Activated CD4-positive, alpha-beta T cell treated with anti-CD3 and anti-CD28 coated beads for 36 hours (primary cell): ENCODE measurements at regions of chr6 and their contacts with region 1.

Region 1: DNA sequence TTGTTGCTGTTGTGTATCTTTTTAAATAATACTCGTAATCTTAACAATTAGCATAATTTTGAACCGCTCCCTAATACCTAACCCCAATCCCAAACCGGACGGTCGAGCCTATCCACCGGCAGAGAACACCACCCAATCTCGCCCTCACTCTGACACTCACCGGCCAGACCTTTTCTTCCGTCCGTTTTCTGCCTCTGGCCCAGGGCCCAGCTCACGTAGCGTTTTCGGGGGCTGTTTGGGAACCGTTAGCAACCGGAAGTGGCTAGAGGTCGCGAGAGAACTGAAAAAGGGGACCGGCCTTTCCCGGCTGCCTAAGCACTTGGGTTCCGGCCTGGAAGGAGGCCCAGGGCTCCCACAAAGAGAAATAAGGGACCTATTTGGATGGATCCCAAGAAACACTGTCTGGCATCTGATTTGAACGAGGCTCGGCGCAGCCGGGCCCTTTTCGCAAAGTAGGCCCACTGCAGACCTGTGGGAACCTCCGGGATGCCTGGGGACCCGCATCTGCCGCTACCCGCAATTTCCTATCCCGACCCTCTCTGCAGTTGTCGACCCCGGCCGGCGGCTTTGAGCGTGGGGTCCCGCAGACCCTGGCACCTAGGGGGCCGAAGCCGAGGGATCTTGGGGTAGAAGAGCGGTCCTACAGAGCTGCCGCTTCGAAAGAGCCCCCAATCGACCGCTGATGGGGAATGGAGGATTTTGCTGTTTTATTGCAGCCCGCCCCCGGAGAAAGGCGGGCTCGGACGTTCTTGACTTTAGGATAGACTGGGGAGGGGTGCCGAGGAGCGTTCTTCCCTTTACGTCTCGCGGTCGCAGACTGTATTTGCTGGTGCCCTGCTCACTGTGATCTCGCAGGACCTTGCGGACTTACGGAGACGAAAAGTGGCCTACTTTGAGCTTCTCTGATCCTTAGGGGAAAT is 4.8 kb upstream of the ZKSCAN8 start:
- DNase-seq: peak; percentile 85
- ATAC-seq: peak; percentile 45
- H3K4me3 Mint-ChIP-seq: peak overlapping the region; percentile 87
- H3K27ac Mint-ChIP-seq: peak overlapping the region; percentile 96
- H3K4me1 Mint-ChIP-seq: peaks cover 70% of the 10 kb centered on the region
- H3K27me3 Mint-ChIP-seq: no peaks in the 10 kb centered on the region

Region 2: DNA sequence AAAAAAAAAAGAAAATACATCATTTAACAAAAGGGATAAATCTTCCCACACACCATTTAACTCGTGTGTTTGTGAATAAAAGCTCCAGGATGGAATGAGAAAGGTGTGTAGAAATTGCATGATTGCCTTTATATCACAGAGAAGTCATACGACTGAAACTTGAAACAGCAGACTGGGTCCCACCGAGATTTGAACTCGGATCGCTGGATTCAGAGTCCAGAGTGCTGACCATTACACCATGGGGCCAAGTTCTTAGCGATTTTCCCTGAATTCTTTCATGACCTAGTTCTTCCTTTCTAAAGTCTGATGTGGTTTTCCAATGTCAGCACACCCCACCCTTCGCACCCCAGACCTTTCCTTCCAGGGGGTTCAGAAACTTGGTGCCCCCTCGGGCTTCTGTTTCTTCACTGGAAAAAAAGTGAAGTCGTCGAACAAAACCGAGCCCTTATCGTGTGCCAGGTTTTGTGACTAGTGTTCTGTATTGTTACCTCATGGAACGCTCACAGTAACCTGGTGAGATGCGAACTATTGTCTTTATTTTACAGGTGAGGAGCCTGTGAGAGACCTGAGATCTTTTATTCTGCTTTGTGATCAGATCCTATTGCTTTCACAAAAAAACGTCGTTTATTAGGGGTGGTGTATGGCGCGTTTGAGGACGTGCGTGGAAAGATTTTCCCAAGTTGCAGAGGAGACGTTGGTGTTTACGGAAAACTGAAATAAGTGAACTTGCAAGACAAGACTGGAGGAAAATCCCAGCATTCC is 345.5 kb before region 1 on chr6:
- CTCF ChIA-PET with region 1: no interaction called
- POLR2A ChIA-PET with region 1: no interaction called
- intact Hi-C with region 1: no loop called
- DNase-seq: peak; percentile 69
- ATAC-seq: no peak
- H3K4me3 Mint-ChIP-seq: peak overlapping the region; percentile 77
- H3K27ac Mint-ChIP-seq: peak overlapping the region; percentile 56
- H3K4me1 Mint-ChIP-seq: peaks cover 26% of the 10 kb centered on the region
- H3K27me3 Mint-ChIP-seq: peaks cover 12% of the 10 kb centered on the region

Region 3: DNA sequence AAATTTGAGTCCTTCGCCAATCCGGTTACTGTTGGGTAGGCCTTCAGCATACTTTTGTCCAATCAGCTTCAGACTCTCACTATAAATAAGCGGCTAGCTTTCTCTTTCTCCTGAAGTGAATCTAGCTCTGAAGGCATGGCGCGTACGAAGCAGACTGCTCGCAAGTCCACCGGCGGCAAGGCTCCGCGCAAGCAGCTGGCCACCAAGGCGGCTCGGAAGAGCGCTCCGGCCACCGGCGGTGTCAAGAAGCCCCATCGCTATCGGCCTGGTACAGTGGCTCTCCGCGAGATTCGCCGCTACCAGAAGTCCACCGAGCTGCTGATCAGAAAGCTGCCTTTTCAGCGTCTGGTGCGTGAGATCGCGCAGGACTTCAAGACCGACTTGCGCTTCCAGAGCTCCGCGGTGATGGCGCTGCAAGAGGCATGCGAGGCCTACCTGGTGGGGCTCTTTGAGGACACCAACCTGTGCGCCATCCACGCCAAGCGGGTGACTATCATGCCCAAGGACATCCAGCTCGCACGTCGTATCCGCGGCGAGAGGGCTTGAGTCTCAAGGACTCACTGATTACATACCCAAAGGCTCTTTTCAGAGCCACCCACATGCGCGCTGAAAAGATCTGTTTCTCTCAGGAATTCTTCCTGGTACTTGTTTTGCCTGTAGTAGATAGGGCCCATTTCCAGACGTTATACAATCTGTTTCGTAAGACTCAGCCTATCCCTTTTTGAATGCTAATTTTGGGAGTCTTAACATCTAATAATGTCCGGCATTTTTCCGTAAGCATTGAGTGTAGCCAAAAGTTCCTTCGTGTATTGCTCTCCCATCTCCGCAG is 326.7 kb before region 1 on chr6:
- CTCF ChIA-PET with region 1: no interaction called
- POLR2A ChIA-PET with region 1: no interaction called
- intact Hi-C with region 1: loop called in 1 of 2 experiments (anchors 2 kb)
- DNase-seq: peak; percentile 83
- ATAC-seq: peak; percentile 33
- H3K4me3 Mint-ChIP-seq: peak overlapping the region; percentile 86
- H3K27ac Mint-ChIP-seq: peak overlapping the region; percentile 95
- H3K4me1 Mint-ChIP-seq: peaks cover 49% of the 10 kb centered on the region
- H3K27me3 Mint-ChIP-seq: no peaks in the 10 kb centered on the region

Region 4: GRCh38 chr6:28011722-28012121 is 125.1 kb before region 1 on chr6:
- CTCF ChIA-PET with region 1: no interaction called
- POLR2A ChIA-PET with region 1: no interaction called
- intact Hi-C with region 1: no loop called
- DNase-seq: no peak
- ATAC-seq: no peak
- H3K4me3 Mint-ChIP-seq: no peak overlapping the region
- H3K27ac Mint-ChIP-seq: no peak overlapping the region
- H3K4me1 Mint-ChIP-seq: peaks cover 10% of the 10 kb centered on the region
- H3K27me3 Mint-ChIP-seq: peaks cover 23% of the 10 kb centered on the region

Region 5: GRCh38 chr6:28080631-28081485 is 56.0 kb before region 1 on chr6:
- CTCF ChIA-PET with region 1: no interaction called
- POLR2A ChIA-PET with region 1: no interaction called
- intact Hi-C with region 1: loop called (anchors 1 kb)
- DNase-seq: peak; percentile 93
- ATAC-seq: peak; percentile 84
- H3K4me3 Mint-ChIP-seq: peak overlapping the region; percentile 93
- H3K27ac Mint-ChIP-seq: peak overlapping the region; percentile 97
- H3K4me1 Mint-ChIP-seq: peaks cover 29% of the 10 kb centered on the region
- H3K27me3 Mint-ChIP-seq: no peaks in the 10 kb centered on the region

Region 6: GRCh38 chr6:28161410-28162079 is 24.7 kb after region 1 on chr6:
- CTCF ChIA-PET with region 1: interaction called, 3 read pairs
- POLR2A ChIA-PET with region 1: no interaction called
- intact Hi-C with region 1: loop called in 1 of 2 experiments (anchors 1 kb)
- DNase-seq: peak; percentile 89
- ATAC-seq: peak; percentile 98
- H3K4me3 Mint-ChIP-seq: peak overlapping the region; percentile 72
- H3K27ac Mint-ChIP-seq: peak overlapping the region; percentile 40
- H3K4me1 Mint-ChIP-seq: peaks cover 14% of the 10 kb centered on the region
- H3K27me3 Mint-ChIP-seq: peaks cover 2% of the 10 kb centered on the region

Region 7: DNA sequence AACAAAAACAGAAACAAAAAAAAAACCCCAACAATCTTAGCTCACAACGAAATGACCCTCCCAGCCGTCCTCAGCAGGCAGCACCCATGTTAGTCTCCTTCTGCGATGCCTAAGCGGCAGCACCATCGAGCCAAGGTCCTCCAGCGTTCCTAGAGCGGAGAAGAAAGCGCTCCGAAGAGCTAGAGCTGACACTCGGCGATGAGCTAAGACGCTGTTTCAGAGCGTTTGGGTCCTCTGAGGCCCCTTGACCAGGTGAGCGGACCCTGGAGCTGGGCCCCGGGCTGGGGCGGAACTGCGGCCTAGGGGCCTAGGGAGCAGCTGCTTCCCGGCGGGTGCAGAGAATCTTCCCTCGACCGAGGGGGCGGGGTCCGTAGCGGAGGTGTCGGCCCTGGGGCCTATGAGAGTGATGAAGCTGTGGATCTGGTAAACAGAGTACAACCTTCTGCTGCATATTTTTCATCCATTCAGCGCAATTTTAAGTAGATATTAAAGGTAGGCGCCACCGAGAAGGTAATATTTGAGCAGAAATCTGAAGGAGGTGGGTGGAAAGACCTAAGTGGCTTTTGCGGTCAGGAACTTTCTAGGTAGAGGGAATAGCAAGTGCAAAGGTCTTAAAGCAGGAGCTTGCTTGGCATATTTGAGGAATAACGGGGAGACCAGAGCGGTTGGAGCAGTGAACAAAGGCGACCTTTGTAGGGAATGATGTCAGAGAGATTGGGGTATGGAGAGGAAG is 130.3 kb after region 1 on chr6 and contains the start of gene ZSCAN26:
- CTCF ChIA-PET with region 1: no interaction called
- POLR2A ChIA-PET with region 1: interaction called, 4 read pairs
- intact Hi-C with region 1: loop called (anchors 1 to 5 kb)
- DNase-seq: peak; percentile 91
- ATAC-seq: peak; percentile 90
- H3K4me3 Mint-ChIP-seq: no peak within 1 kb of the TSS
- H3K27ac Mint-ChIP-seq: no peak within 1 kb of the TSS
- H3K4me1 Mint-ChIP-seq: peaks cover 32% of the 10 kb centered on the region
- H3K27me3 Mint-ChIP-seq: no peaks in the 10 kb centered on the region
- total RNA-seq, gene ZSCAN26: 5.0 to 6.7 TPM

Region 8: GRCh38 chr6:28355743-28356665 is 219.2 kb after region 1 on chr6:
- CTCF ChIA-PET with region 1: interaction called, 9 read pairs
- POLR2A ChIA-PET with region 1: interaction called, 3 read pairs
- intact Hi-C with region 1: loop called (anchors 1 kb)
- DNase-seq: peak; percentile 71
- ATAC-seq: peak; percentile 85
- H3K4me3 Mint-ChIP-seq: peak overlapping the region; percentile 75
- H3K27ac Mint-ChIP-seq: peak overlapping the region; percentile 81
- H3K4me1 Mint-ChIP-seq: peaks cover 15% of the 10 kb centered on the region
- H3K27me3 Mint-ChIP-seq: no peaks in the 10 kb centered on the region

Region 9: DNA sequence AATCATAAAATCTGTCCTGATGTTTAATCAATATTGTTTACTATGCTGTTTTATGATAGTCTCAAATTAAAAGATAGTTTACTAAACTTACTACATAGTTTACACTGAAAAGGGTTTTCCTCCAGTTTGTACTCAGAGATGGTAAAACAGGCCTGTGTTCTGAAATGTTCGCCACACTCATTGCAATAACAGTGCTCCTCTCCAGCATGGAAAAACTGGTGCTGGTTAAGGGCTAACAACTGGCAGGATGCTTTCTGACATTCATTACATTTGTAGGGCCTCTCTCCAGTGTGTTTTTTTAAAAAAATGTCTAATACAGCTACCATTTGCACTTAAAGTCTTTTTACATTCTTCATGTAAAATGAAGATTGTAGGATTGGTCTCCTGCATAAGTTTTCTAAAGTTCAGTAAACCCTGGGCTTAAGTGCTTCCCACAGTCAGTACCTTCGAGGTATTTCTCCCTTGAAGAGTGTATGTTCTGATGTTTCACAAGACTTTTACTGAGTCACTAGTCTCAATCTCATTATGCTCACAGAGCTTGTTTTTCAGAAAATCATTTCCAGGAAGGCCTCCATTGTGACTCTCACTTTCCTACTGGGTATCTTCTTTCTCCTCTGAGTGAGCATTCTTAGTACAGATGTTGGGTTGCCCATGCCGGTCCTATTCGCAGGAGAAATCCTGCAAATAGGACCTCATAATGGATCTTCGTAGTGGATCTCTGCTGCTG is 271.4 kb after region 1 on chr6:
- CTCF ChIA-PET with region 1: no interaction called
- POLR2A ChIA-PET with region 1: no interaction called
- intact Hi-C with region 1: no loop called
- DNase-seq: peak; percentile 25
- ATAC-seq: peak; percentile 91
- H3K4me3 Mint-ChIP-seq: no peak overlapping the region
- H3K27ac Mint-ChIP-seq: peak overlapping the region; percentile 64
- H3K4me1 Mint-ChIP-seq: peaks cover 23% of the 10 kb centered on the region
- H3K27me3 Mint-ChIP-seq: peaks cover 42% of the 10 kb centered on the region

Region 10: GRCh38 chr6:28586962-28587745 is 450.3 kb after region 1 on chr6:
- CTCF ChIA-PET with region 1: no interaction called
- POLR2A ChIA-PET with region 1: no interaction called
- intact Hi-C with region 1: loop called in 1 of 2 experiments (anchors 10 kb)
- DNase-seq: peak; percentile 83
- ATAC-seq: peak; percentile 87
- H3K4me3 Mint-ChIP-seq: peak overlapping the region; percentile 84
- H3K27ac Mint-ChIP-seq: peak overlapping the region; percentile 64
- H3K4me1 Mint-ChIP-seq: peaks cover 34% of the 10 kb centered on the region
- H3K27me3 Mint-ChIP-seq: peaks cover 55% of the 10 kb centered on the region